ENCODE measurements at regions of chr18 and their contacts with region 1.

Region 1: DNA sequence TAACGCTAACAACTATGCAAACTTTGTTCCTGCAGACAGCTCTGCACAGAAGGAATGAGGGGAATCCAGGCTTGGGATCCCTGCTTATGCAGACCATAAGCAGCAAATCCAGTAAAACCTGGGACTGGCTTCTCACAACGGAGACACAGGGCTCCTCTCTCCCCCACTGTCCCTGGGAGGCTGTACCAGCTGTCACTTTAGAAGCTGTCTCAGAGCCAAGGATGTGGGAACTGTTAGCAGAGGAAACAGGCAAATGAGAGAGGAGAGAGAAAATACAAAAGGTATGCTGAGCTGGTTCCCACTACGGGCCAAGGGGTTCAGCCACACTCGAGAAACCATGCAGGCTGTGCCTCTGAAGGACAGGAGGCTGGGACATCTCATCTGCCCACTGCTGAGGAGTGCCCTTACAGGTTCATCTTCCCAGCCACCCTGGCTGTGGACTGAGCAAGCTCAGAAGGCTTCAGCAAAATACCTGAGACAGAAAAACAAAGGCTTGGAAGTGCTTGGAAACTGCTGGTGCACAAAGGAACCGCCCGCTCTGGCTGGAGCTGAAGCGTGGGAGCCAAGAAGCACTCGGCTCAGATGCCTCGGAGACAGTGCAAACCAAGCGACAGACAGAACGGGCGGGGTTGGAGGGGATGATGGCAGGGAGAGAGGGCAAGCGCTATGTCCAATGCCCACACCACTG is 72.5 kb downstream of the FAM210A start:
- DNase-seq: no peak
- ATAC-seq: peak; percentile 39
- H3K4me3 ChIP-seq: no peak overlapping the region
- H3K27ac ChIP-seq: no peak overlapping the region
- H3K4me1 ChIP-seq: peaks cover 12% of the 10 kb centered on the region
- H3K27me3 ChIP-seq: no peaks in the 10 kb centered on the region
- CTCF ChIP-seq: no peak
- EP300 ChIP-seq: no peak
- POLR2A ChIP-seq: no peak
- RAD21 ChIP-seq: no peak

Region 2: DNA sequence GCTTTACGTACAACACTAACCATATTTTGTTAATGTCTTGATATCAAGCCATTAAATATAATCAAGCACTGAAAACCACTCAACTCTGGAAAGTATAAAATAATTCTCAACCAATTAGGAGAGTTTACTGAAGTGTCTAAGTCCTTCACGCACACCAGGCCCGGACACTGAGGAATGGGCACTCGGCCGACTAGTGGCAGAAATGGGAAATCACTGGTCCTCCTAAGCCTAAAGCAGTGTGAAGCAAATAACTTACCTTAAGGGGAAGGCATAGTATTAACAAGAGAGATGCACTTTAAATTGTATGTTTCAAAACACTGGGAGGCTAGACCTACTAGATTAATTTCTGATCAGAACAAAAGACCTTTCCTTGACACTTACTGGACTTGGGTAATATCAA is 26.7 kb after region 1 on chr18:
- CTCF ChIA-PET with region 1: no interaction called
- POLR2A ChIA-PET with region 1: no interaction called
- in situ Hi-C with region 1: no loop called
- intact Hi-C with region 1: loop called (anchors 1 kb)
- DNase-seq: peak; percentile 29
- ATAC-seq: peak; percentile 88
- H3K4me3 ChIP-seq: no peak overlapping the region
- H3K27ac ChIP-seq: no peak overlapping the region
- H3K4me1 ChIP-seq: peaks cover 6% of the 10 kb centered on the region; the same call in 1 of the 2 replicates
- H3K27me3 ChIP-seq: no peaks in the 10 kb centered on the region
- CTCF ChIP-seq: peak; percentile 55
- EP300 ChIP-seq: no peak
- POLR2A ChIP-seq: no peak
- RAD21 ChIP-seq: no peak

Region 3: DNA sequence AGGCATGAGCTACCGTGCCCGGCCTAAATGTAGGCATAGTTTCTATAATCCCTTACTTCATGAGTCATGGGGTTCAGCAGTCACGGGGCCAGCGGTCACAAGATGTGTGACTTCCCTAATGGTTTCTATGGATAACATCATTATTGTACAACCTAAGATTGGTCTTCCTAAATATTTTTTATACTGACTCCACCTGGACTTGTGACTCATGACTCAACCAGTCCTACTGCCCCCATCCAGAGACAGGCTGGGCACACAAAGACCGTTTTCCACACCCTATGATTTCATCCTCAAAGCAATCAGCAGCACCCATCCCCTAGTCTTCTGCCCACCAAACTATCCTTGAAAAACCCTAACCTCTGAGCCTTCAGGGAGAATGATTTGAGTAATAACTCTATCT is 56.6 kb after region 1 on chr18:
- CTCF ChIA-PET with region 1: no interaction called
- POLR2A ChIA-PET with region 1: no interaction called
- in situ Hi-C with region 1: no loop called
- intact Hi-C with region 1: no loop called
- DNase-seq: no peak
- ATAC-seq: no peak
- H3K4me3 ChIP-seq: no peak overlapping the region
- H3K27ac ChIP-seq: no peak overlapping the region
- H3K4me1 ChIP-seq: peaks cover 33% of the 10 kb centered on the region
- H3K27me3 ChIP-seq: no peaks in the 10 kb centered on the region; a peak in 1 of 5 replicates
- CTCF ChIP-seq: no peak
- EP300 ChIP-seq: no peak
- POLR2A ChIP-seq: no peak
- RAD21 ChIP-seq: no peak

Region 4: DNA sequence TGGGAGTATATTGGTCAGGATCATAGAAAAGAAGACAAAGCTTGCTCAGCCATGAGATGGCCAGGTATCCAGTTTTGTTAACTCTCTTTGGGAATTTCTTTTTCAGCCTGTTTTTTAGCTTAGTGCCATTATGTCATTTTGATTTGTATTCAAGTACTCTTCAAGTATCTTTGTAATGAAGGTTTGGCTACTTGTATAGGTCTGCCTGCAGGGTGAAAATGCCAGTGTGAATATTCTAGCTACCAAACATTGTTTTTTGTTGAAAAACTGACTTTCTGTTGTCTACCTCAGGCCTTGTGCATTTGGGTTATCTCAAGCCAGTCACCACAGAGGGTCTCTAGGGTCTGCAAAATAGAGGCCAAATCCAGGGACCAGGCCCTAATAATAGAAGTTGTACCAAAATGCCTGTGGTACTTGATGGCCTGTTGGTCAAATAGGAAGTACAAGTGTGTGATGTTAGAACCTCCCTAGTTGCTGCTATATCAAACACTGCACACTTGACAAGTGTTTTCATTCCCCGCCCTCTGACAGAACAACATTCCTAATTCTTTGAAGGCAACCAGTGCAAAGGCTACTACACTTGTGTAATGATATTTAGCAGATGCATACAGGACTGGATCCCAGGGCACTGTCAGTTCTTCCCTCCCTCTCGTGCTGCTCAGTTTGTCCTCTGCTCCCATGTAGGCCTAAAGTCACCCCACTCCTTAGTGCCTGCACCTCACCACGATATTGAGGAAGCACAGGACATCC is 109.0 kb after region 1 on chr18:
- CTCF ChIA-PET with region 1: no interaction called
- POLR2A ChIA-PET with region 1: no interaction called
- in situ Hi-C with region 1: loop called (anchors 25 kb)
- intact Hi-C with region 1: no loop called
- DNase-seq: no peak
- ATAC-seq: no peak
- H3K4me3 ChIP-seq: no peak overlapping the region
- H3K27ac ChIP-seq: no peak overlapping the region
- H3K4me1 ChIP-seq: no peaks in the 10 kb centered on the region
- H3K27me3 ChIP-seq: no peaks in the 10 kb centered on the region
- CTCF ChIP-seq: no peak
- EP300 ChIP-seq: no peak
- POLR2A ChIP-seq: no peak
- RAD21 ChIP-seq: no peak